AG04450 (cell line): ENCODE measurements at regions of chr3 and their contacts with region 1.

Region 1: DNA sequence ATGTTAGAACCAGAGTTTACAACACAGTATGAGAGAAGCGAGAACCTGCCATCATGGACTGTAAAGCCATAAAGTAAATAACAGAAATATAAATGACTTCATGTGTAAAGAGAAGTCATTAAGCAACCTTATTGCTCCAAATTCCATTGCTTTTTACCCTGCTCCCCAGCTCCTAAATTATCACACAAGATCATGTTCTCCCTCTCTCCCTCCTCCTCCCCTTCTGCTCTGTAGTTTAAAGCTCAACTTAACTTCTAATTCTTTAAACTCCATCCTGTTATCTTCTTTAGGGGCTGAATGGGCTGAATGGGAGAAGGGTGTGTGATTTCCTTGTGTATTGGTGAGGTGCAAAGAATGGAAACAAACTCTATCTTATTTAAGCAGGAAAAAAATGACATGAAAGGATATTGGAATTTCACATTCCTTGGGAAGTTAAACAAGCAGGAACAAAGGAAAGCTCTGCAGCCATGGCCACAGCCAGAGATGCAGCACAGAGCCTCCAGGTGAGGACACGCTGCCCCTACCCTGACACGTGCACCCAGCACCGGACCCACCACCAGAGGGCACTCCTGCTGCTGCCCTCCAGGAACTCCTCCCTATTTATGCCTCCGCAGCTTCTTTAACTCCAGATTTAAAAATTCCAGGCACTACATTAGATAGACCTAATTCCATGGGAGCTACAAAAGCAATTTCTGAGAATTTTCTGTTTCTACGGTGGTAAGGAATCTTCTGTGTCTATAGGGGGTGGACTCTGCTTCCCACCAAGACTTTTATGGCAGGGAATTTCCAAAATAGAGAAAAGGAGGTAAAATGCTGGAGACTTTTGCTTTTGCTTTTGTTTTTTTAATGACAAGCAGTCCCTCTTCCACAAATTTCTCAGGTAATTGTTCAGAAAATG is 76.9 kb upstream of the ABI3BP start:
- DNase-seq: no peak
- H3K4me3 ChIP-seq: no peak overlapping the region
- H3K27ac ChIP-seq: no peak overlapping the region
- H3K27me3 ChIP-seq: no peaks in the 10 kb centered on the region
- CTCF ChIP-seq: peak; percentile 58

Region 2: DNA sequence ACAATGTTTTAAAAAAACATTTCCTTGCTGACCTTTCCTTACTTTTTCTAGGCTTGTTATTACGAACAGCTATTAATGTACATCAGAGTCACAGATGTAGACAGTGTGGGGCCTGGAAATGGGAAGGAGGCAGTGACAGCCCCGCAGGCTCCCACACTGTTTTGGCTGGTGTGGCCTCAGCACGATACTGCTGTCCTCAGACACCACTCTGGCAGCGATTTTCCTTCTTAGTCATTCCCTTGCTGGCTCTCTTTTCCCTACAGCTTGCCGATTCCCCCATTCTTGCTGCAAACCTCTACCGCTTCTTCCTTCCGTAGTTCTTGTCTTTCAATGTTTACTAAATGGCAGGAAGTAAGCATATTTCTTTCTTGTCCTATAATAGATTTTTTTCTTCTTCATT is 190.1 kb before region 1 on chr3:
- CTCF ChIA-PET with region 1: no interaction called
- POLR2A ChIA-PET with region 1: no interaction called
- DNase-seq: no peak
- H3K4me3 ChIP-seq: no peak overlapping the region
- H3K27ac ChIP-seq: no peak overlapping the region
- H3K27me3 ChIP-seq: no peaks in the 10 kb centered on the region
- CTCF ChIP-seq: no peak

Region 3: GRCh38 chr3:101050046-101050445 is 20.1 kb before region 1 on chr3:
- CTCF ChIA-PET with region 1: interaction called, 10 read pairs
- POLR2A ChIA-PET with region 1: no interaction called
- DNase-seq: no peak
- H3K4me3 ChIP-seq: no peak overlapping the region
- H3K27ac ChIP-seq: no peak overlapping the region
- H3K27me3 ChIP-seq: no peaks in the 10 kb centered on the region
- CTCF ChIP-seq: no peak

Region 4: GRCh38 chr3:101081999-101082398 is 11.8 kb after region 1 on chr3:
- CTCF ChIA-PET with region 1: interaction called, 10 read pairs
- POLR2A ChIA-PET with region 1: interaction called, 3 read pairs
- DNase-seq: peak; percentile 61
- H3K4me3 ChIP-seq: no peak overlapping the region
- H3K27ac ChIP-seq: no peak overlapping the region
- H3K27me3 ChIP-seq: no peaks in the 10 kb centered on the region
- CTCF ChIP-seq: no peak